ENCODE measurements at regions of chr15 and their contacts with region 1.

Region 1: GRCh38 chr15:55775316-55775715 is 32.4 kb upstream of the PRTG start:
- DNase-seq: no peak
- H3K4me3 ChIP-seq: no peak overlapping the region
- H3K27ac ChIP-seq: no peak overlapping the region
- H3K4me1 ChIP-seq: peaks cover 0 to 4% (median 0%) of the 10 kb centered on the region in 4 experiments; a peak in 1 of 7 replicates
- H3K27me3 ChIP-seq: no peaks in the 10 kb centered on the region
- CTCF ChIP-seq: no peak
- EP300 ChIP-seq: no peak
- POLR2A ChIP-seq: no peak
- RAD21 ChIP-seq: 0 out of 4 replicates have a peak, but pooled peaks of 1 of the 2 experiments have one; percentile 5

Region 2: DNA sequence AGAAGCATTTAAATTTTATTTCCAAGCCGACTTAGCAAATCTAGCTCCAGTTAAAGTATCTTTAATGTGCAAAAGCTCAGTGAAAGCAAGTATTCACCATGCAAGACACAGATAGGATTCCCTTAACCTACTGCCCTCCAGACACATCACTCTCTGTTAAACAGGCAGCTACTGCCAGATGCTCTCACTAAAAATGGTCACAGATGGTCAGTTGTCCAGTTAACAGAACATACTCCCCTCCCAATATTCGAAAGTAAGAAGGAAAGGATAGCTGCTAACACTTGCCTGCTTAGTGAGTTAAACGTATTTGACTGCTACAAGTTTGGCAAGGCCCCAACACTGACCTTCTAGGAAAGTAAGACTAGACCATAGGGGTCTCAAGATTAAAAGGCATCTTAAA is 106.0 kb before region 1 on chr15:
- CTCF ChIA-PET with region 1: interaction called, 15 read pairs
- POLR2A ChIA-PET with region 1: no interaction called
- DNase-seq: no peak
- H3K4me3 ChIP-seq: no peak overlapping the region
- H3K27ac ChIP-seq: no peak overlapping the region
- H3K4me1 ChIP-seq: peaks cover 0 to 3% (median 0%) of the 10 kb centered on the region in 4 experiments; a peak in 2 of 7 replicates
- H3K27me3 ChIP-seq: no peaks in the 10 kb centered on the region
- CTCF ChIP-seq: no peak
- EP300 ChIP-seq: no peak
- POLR2A ChIP-seq: no peak
- RAD21 ChIP-seq: no peak

Region 3: GRCh38 chr15:55750706-55751105 is 24.6 kb before region 1 on chr15:
- CTCF ChIA-PET with region 1: interaction called, 20 read pairs
- POLR2A ChIA-PET with region 1: no interaction called
- DNase-seq: no peak
- H3K4me3 ChIP-seq: no peak overlapping the region
- H3K27ac ChIP-seq: no peak overlapping the region
- H3K4me1 ChIP-seq: no peaks in the 10 kb centered on the region
- H3K27me3 ChIP-seq: peaks cover 0 to 3% (median 1%) of the 10 kb centered on the region in 4 experiments; a peak in 2 of 7 replicates
- CTCF ChIP-seq: no peak
- EP300 ChIP-seq: no peak
- POLR2A ChIP-seq: no peak
- RAD21 ChIP-seq: no peak

Region 4: GRCh38 chr15:55789066-55789660 is 13.8 kb after region 1 on chr15:
- CTCF ChIA-PET with region 1: interaction called, 110 read pairs
- POLR2A ChIA-PET with region 1: interaction called, 3 read pairs
- DNase-seq: peak in 1 of 2 experiments; percentile 88
- H3K4me3 ChIP-seq: no peak overlapping the region
- H3K27ac ChIP-seq: no peak overlapping the region
- H3K4me1 ChIP-seq: peaks cover 0 to 6% (median 2%) of the 10 kb centered on the region in 4 experiments; a peak in 3 of 7 replicates
- H3K27me3 ChIP-seq: no peaks in the 10 kb centered on the region
- CTCF ChIP-seq: peak; percentile 69 to 85 (median 82)
- EP300 ChIP-seq: no peak
- POLR2A ChIP-seq: no peak
- RAD21 ChIP-seq: peak; percentile 47 to 59

Measured in H1 (cell line).